GM12878 (cell line): ENCODE measurements at regions of chr2 and their contacts with region 1.

Region 1: GRCh38 chr2:112941753-112942658 is 31.0 kb downstream of the IL37 start:
- DNase-seq: peak; percentile 19
- ATAC-seq: peak; percentile 100
- H3K4me3 ChIP-seq: no peak overlapping the region
- H3K27ac ChIP-seq: no peak overlapping the region
- H3K4me1 ChIP-seq: no peaks in the 10 kb centered on the region
- H3K27me3 ChIP-seq: 0 out of 4 replicates have a peak, but pooled peaks cover 0 to 6% of the 10 kb centered on the region in 2 experiments
- CTCF ChIP-seq: peak; percentile 93 to 96 (median 95)
- EP300 ChIP-seq: no peak
- POLR2A ChIP-seq: no peak
- RAD21 ChIP-seq: peak; percentile 96

Region 2: DNA sequence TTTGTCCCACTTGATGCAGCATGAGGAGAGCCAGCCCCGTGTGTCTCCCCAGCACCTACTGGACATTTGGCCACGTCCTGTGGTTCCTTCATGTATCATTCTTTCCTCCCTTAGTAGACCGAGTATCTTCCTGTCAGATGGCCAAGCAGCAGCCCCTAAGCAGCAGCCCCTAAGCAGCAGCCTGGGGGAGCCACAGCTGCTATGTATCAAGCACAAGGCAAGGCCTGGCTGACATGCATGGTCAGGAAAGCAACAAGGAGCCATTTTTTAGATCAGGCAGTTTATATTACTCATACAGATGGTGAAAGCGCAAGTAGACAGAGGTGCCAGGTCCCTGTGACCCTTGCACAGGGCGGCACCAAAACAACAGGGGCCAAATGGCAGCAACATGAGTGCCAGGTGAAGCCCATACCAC is 335.5 kb before region 1 on chr2:
- CTCF ChIA-PET with region 1: interaction called, 21 read pairs
- POLR2A ChIA-PET with region 1: no interaction called
- RAD21 ChIA-PET with region 1: interaction called, 25 read pairs
- SMC1A ChIA-PET with region 1: interaction called, 14 read pairs
- in situ Hi-C with region 1: no loop called
- intact Hi-C with region 1: no loop called
- DNase-seq: no peak
- ATAC-seq: peak; percentile 20; the same call in 1 of the 3 replicates
- H3K4me3 ChIP-seq: no peak overlapping the region
- H3K27ac ChIP-seq: no peak overlapping the region
- H3K4me1 ChIP-seq: no peaks in the 10 kb centered on the region
- H3K27me3 ChIP-seq: no peaks in the 10 kb centered on the region
- CTCF ChIP-seq: no peak
- EP300 ChIP-seq: no peak
- POLR2A ChIP-seq: no peak
- RAD21 ChIP-seq: no peak

Region 3: GRCh38 chr2:112749755-112750559 is 192.0 kb before region 1 on chr2:
- CTCF ChIA-PET with region 1: interaction called, 390 read pairs
- POLR2A ChIA-PET with region 1: no interaction called
- RAD21 ChIA-PET with region 1: interaction called, 227 read pairs
- SMC1A ChIA-PET with region 1: interaction called, 109 read pairs
- in situ Hi-C with region 1: loop called (anchors 5 kb)
- intact Hi-C with region 1: loop called (anchors 1 kb)
- DNase-seq: no peak
- ATAC-seq: peak; percentile 95
- H3K4me3 ChIP-seq: no peak overlapping the region
- H3K27ac ChIP-seq: no peak overlapping the region
- H3K4me1 ChIP-seq: no peaks in the 10 kb centered on the region
- H3K27me3 ChIP-seq: no peaks in the 10 kb centered on the region
- CTCF ChIP-seq: peak; percentile 95 to 98 (median 98); a peak in 5 of 6 replicates
- EP300 ChIP-seq: no peak
- POLR2A ChIP-seq: no peak
- RAD21 ChIP-seq: peak; percentile 98

Region 4: DNA sequence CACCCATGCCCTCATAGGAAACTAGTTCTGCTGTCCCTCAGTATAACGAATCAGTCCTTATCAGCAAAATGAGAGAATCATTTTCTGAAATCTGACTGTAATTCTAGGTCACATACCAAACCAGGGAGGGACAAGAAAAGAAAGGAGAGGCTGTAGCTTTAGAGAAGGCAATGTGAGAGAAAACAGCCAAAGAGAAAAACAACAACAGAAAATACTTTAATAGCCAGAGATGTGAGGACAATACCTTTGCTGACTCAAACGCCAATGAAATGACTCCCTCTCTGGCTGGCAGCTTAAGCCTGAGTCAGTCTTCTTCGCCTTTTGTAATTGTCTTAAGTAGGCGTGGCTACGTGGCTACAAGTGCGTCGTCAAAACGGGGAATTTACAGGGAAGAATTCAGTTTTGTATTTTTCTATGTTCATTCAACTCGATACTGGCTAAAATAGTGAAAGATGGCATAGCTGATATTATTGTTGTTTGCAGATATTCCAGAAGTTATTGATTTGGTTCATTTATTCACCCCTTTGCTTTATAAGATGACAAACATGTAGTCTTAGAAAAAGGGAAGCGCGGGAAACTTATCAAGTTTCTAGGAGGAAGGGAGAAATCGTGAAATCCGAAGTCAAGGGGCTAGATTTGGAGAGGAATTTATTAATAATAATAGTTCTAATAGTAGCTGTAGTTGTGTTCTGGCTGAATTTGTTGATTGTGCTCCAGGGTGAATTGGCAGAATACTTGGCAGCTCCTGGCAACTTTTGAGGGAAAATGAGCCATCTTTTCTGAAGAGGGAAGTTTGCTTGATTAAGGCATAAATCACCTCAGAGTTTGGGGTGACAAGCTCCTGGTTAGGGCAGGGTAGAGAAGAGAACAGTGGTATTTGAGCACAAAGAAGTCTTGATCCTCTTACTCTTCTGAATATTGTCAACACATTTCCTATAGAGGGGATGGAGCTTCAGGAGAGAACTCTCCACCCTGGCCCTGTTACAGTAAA is 157.5 kb before region 1 on chr2 and contains the start of gene IL1A:
- CTCF ChIA-PET with region 1: interaction called, 11 read pairs
- POLR2A ChIA-PET with region 1: no interaction called
- RAD21 ChIA-PET with region 1: interaction called, 4 read pairs
- SMC1A ChIA-PET with region 1: interaction called, 7 read pairs
- in situ Hi-C with region 1: no loop called
- intact Hi-C with region 1: no loop called
- DNase-seq: no peak
- ATAC-seq: no peak
- H3K4me3 ChIP-seq: no peak within 1 kb of the TSS
- H3K27ac ChIP-seq: peak within 1 kb of the TSS; percentile 62
- H3K4me1 ChIP-seq: peaks cover 23% of the 10 kb centered on the region
- H3K27me3 ChIP-seq: no peaks in the 10 kb centered on the region
- CTCF ChIP-seq: no peak
- EP300 ChIP-seq: no peak
- POLR2A ChIP-seq: peak; percentile 70
- RAD21 ChIP-seq: no peak
- polyA plus RNA-seq, gene IL1A: 5.7 to 8.7 TPM

Region 5: DNA sequence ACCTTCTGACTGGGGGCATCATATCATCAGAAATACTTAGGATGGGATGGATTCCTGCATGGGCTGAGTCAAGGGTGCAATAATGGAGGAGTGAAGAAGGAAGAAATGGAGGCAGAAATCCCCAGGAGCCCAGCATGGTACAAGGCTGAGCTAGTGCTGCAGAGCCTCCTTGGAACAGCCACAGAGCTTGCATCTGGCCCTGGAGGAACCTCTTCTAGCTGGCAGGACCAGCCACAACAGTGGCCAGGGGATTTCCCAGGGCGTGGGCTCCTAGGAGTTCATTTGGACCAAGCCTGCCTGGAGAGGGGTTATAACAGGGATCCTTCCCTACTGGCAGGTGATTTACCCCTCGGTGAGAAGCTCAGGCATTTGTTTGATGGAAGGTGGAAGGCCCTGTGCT is 35.7 kb before region 1 on chr2:
- CTCF ChIA-PET with region 1: interaction called, 41 read pairs
- POLR2A ChIA-PET with region 1: no interaction called
- RAD21 ChIA-PET with region 1: interaction called, 19 read pairs
- SMC1A ChIA-PET with region 1: interaction called, 7 read pairs
- in situ Hi-C with region 1: no loop called
- intact Hi-C with region 1: no loop called
- DNase-seq: no peak
- ATAC-seq: peak; percentile 32; the same call in 1 of the 3 replicates
- H3K4me3 ChIP-seq: no peak overlapping the region
- H3K27ac ChIP-seq: no peak overlapping the region
- H3K4me1 ChIP-seq: no peaks in the 10 kb centered on the region
- H3K27me3 ChIP-seq: no peaks in the 10 kb centered on the region
- CTCF ChIP-seq: no peak
- EP300 ChIP-seq: no peak
- POLR2A ChIP-seq: no peak
- RAD21 ChIP-seq: no peak

Region 6: DNA sequence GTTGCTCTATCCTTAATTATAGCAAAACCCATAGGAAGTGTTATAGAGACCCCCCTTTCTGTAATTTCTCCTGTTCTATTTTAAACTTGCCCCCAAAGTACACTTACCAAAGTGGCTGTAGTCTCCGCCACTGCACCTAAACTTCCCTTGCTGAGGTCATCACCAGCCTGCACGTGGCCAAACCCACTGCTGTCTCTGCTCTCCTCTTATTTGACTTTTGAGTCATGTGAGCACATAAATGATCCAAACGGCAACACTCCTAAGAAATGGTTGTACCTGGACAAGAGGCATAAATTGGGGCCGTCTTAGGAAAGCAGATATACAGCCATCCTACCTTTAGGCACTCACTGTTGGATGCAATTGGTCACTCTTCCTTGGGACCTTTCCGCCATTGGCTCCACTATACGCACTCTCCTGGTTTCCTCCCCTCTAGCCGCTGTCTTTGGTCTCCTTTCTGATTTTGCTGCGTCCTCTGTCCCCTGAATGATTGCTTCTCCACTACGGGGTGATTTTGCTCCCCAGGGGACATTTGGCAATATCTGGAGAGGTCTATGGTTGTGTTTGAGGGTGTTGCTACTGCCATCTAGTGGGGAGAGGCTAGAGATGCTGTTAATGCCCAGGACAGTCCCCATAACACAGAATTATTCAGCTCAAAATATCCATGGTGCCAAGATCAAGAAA is 16.6 kb after region 1 on chr2:
- CTCF ChIA-PET with region 1: interaction called, 54 read pairs
- POLR2A ChIA-PET with region 1: no interaction called
- RAD21 ChIA-PET with region 1: interaction called, 11 read pairs
- SMC1A ChIA-PET with region 1: interaction called, 11 read pairs
- in situ Hi-C with region 1: no loop called
- intact Hi-C with region 1: no loop called
- DNase-seq: no peak
- ATAC-seq: peak; percentile 96
- H3K4me3 ChIP-seq: no peak overlapping the region
- H3K27ac ChIP-seq: no peak overlapping the region
- H3K4me1 ChIP-seq: no peaks in the 10 kb centered on the region
- H3K27me3 ChIP-seq: peaks cover 0 to 5% of the 10 kb centered on the region in 2 experiments; a peak in 3 of 4 replicates
- CTCF ChIP-seq: peak; percentile 83 to 87 (median 86)
- EP300 ChIP-seq: no peak
- POLR2A ChIP-seq: no peak
- RAD21 ChIP-seq: peak; percentile 68